T-cell (primary cell): ENCODE measurements at regions of chr1 and their contacts with region 1.

Region 1: DNA sequence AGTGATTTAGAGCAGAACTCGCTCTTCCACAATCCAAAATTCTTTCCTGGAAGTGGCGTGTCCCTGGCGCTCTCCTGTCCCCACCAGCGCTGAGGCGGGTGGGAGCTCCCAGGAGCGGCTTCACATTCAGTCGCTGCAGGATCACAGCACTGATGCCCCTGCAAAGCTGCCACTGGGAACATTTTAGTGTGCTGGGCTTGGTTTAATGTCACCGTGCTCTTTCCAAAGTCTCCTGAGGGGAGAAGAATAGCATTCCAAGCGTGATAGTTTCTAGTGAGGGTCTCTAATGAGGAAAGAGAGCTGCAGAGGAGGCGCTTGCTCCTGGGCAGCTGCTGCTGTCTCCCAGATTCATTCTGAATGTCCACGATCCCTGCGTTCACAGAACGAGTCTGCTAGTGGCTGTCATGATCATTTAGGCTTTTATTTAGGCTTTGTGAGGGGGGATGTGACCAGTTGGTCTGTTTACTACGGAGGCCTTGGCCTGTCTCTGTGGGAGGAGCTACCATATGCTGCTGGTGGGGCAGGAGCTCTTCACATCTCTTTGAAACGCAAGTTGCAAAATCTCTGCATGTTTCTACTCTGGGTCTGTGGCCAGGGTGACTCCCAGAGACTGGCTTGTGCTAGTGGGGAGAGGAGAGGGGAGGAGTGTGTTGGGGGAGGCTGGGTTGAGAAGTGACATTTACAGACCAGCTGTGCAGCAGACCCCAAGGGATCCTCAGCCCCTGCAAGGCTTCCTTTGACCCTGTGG is 23.4 kb downstream of the OLFML3 start:
- DNase-seq: no peak
- ATAC-seq: no peak
- H3K4me3 ChIP-seq: no peak overlapping the region
- H3K4me3 Mint-ChIP-seq: no peak overlapping the region
- H3K27ac ChIP-seq: no peak overlapping the region
- H3K27ac Mint-ChIP-seq: no peak overlapping the region
- H3K4me1 ChIP-seq: no peaks in the 10 kb centered on the region
- H3K4me1 Mint-ChIP-seq: peaks cover 2 to 9% (median 6%) of the 10 kb centered on the region in 3 donors
- H3K27me3 ChIP-seq: peaks cover 0 to 19% of the 10 kb centered on the region in 2 experiments
- H3K27me3 Mint-ChIP-seq: peaks cover 5 to 8% of the 10 kb centered on the region in 2 donors

Region 2: GRCh38 chr1:113887402-113888175 is 115.1 kb before region 1 on chr1 and contains the start of gene BCL2L15:
- CTCF ChIA-PET with region 1: no interaction called
- POLR2A ChIA-PET with region 1: no interaction called
- DNase-seq: no peak
- ATAC-seq: peak in 1 of 4 experiments; percentile 33
- H3K4me3 ChIP-seq: no peak within 1 kb of the TSS
- H3K4me3 Mint-ChIP-seq: peak within 1 kb of the TSS in 1 of 3 donors; percentile 74
- H3K27ac ChIP-seq: no peak within 1 kb of the TSS
- H3K27ac Mint-ChIP-seq: peak within 1 kb of the TSS; percentile 44 to 76
- H3K4me1 ChIP-seq: peaks cover 2 to 6% of the 10 kb centered on the region in 2 experiments
- H3K4me1 Mint-ChIP-seq: peaks cover 16 to 37% (median 21%) of the 10 kb centered on the region in 3 donors
- H3K27me3 ChIP-seq: no peaks in the 10 kb centered on the region
- H3K27me3 Mint-ChIP-seq: no peaks in the 10 kb centered on the region
- total RNA-seq, gene BCL2L15: 1.2 to 5.8 (median 1.7) TPM

Region 3: DNA sequence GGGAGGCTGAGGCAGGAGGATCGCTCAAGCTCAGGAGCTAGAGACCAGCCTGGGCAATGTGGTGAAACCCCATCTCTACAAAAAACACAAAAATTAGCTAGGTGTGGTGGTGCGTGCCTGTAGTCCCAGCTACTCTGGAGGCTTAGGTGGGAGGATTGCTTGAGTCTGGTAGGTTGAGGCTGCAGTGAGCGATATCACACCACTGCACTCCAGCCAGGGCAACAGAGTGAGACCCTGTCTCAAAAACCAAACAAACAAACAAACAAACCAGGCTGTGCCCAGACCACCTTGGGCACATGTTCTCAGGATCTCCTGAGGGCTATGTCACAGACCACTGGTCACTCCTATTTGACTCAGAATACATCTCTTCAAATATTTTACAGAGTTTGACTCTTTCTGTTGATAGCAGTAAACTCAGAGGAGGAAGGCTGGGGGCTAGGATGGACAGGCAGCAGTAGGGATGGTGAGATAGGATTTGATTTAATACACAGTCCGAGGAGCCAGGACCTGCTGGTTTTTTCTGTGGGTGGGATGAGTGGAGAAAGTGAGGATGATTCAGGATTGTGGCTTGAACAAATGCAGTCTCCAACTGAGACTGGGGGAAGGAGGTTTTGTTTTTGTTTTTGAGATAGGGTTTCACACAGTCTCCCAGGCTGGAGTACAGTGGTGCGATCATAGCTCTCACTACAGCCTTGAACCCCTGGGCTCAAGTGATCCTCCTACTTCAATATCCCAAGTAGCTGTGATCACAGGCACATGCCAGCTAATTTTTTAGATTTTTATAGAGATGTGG is 23.1 kb after region 1 on chr1:
- CTCF ChIA-PET with region 1: no interaction called
- POLR2A ChIA-PET with region 1: no interaction called
- DNase-seq: no peak
- ATAC-seq: no peak
- H3K4me3 ChIP-seq: no peak overlapping the region
- H3K4me3 Mint-ChIP-seq: no peak overlapping the region
- H3K27ac ChIP-seq: no peak overlapping the region
- H3K27ac Mint-ChIP-seq: no peak overlapping the region
- H3K4me1 ChIP-seq: no peaks in the 10 kb centered on the region
- H3K4me1 Mint-ChIP-seq: no peaks in the 10 kb centered on the region
- H3K27me3 ChIP-seq: no peaks in the 10 kb centered on the region
- H3K27me3 Mint-ChIP-seq: peaks cover 0 to 3% of the 10 kb centered on the region in 2 donors

Region 4: DNA sequence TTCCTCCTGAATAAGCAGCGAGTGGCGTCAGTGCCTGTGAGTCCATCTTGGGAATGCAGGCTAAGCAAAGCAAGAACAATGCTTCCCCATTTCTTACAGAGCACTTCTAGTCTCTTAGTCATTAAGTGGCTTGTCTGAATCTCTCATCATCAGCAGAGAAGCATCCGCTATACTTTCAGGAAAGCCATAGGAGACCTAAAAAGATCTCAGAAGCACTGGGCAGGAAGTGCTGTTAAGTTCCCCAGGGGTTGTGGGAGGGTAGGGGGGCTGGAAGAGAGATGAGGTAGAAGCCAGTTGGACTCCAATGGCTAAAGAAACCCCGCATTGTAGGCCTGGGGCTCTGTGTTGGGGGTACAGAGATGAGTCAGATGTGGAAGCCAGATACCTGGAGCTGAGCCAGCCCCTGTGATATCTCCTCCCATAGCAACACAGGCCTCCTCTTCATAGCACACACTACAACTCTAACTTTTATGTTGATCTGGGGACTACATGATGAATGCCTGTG is 106.1 kb after region 1 on chr1:
- CTCF ChIA-PET with region 1: no interaction called
- POLR2A ChIA-PET with region 1: no interaction called
- DNase-seq: no peak
- ATAC-seq: no peak
- H3K4me3 ChIP-seq: no peak overlapping the region
- H3K4me3 Mint-ChIP-seq: no peak overlapping the region
- H3K27ac ChIP-seq: no peak overlapping the region
- H3K27ac Mint-ChIP-seq: no peak overlapping the region
- H3K4me1 ChIP-seq: no peaks in the 10 kb centered on the region
- H3K4me1 Mint-ChIP-seq: peaks cover 9 to 14% (median 9%) of the 10 kb centered on the region in 3 donors
- H3K27me3 ChIP-seq: peaks cover 0 to 12% of the 10 kb centered on the region in 2 experiments
- H3K27me3 Mint-ChIP-seq: no peaks in the 10 kb centered on the region

Region 5: GRCh38 chr1:114428083-114428749 is 425.6 kb after region 1 on chr1:
- CTCF ChIA-PET with region 1: interaction called in 1 of 2 experiments, 10 read pairs
- POLR2A ChIA-PET with region 1: no interaction called
- DNase-seq: peak in 17 of 35 experiments; percentile 1 to 54 (median 14)
- ATAC-seq: no peak
- H3K4me3 ChIP-seq: no peak overlapping the region
- H3K4me3 Mint-ChIP-seq: no peak overlapping the region
- H3K27ac ChIP-seq: no peak overlapping the region
- H3K27ac Mint-ChIP-seq: peak overlapping the region in 1 of 2 donors; percentile 28
- H3K4me1 ChIP-seq: no peaks in the 10 kb centered on the region
- H3K4me1 Mint-ChIP-seq: no peaks in the 10 kb centered on the region
- H3K27me3 ChIP-seq: no peaks in the 10 kb centered on the region
- H3K27me3 Mint-ChIP-seq: no peaks in the 10 kb centered on the region

Region 6: DNA sequence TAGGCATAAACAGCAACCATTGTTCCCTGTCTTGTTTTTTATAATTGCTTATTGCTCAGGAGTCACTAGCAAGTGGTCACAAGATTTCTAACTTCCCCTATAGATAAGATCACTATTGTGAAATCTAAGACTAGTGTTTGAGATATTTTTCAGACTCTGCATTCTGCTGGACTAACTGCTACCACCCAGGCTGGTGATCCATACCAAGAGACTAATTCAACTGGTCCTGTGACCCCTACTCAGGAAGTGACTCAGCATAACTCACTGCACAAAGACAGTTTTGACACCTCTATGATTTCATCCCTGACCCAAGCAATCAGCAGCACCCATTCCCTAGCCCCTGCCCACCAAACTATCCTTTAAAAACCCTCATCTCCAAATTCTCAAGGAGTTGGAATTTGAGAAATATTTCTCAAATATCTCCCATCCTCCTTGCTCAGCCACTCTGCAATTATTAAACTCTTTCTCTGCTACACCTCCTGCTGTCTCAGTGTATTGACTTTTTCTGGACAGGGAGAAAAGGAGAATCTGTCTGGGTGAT is 455.6 kb after region 1 on chr1:
- CTCF ChIA-PET with region 1: no interaction called
- POLR2A ChIA-PET with region 1: interaction called in 1 of 2 experiments, 10 read pairs
- DNase-seq: no peak
- ATAC-seq: no peak
- H3K4me3 ChIP-seq: no peak overlapping the region
- H3K4me3 Mint-ChIP-seq: no peak overlapping the region
- H3K27ac ChIP-seq: no peak overlapping the region
- H3K27ac Mint-ChIP-seq: peak overlapping the region; percentile 53 to 61
- H3K4me1 ChIP-seq: no peaks in the 10 kb centered on the region
- H3K4me1 Mint-ChIP-seq: peaks cover 13 to 20% (median 17%) of the 10 kb centered on the region in 3 donors
- H3K27me3 ChIP-seq: no peaks in the 10 kb centered on the region
- H3K27me3 Mint-ChIP-seq: no peaks in the 10 kb centered on the region